Caco-2 (cell line): ENCODE measurements at regions of chr16 and their contacts with region 1.

Region 1: DNA sequence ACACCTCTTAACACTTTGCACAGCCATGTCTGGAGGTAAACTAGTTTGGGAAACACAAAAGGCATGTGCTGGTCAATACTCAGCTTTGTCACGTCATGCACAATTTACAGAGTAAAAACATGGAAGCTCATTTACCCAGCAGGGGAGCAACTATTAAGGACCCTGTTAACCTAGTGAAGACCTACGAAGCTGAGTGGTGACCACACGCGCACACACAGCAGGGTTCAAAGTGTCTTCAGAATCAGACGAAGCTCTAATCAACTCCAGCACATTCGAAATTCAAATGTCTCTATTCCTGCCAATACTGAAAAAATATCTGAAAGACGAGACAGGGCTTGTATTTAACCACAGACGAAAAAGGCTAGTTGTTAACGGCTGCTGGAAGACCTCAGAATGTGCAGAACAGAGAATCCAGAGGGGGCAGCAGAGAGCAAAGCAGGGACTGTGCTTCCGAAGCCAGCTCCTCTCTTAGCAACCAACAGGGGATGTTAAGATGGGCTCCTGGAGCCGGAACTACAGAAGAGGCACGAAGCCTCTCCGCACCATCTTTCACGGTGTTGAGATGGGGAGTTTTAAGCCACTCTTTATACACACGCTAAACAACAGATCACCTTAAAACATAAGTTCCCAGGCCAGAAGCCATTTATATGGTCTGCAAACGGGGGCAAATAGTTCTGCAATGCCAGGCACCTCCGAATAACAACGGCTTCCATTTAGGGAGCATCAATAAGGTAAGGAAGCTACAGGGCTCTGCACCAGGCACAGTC is 45.7 kb downstream of the CMTM4 start:
- DNase-seq: peak; percentile 75 to 86
- H3K4me3 ChIP-seq: no peak overlapping the region
- H3K4me3 Mint-ChIP-seq: peak overlapping the region; percentile 42
- H3K27ac Mint-ChIP-seq: no peak overlapping the region
- H3K4me1 ChIP-seq: peaks cover 19% of the 10 kb centered on the region; the same call in 1 of the 2 replicates
- H3K4me1 Mint-ChIP-seq: peaks cover 24% of the 10 kb centered on the region
- H3K27me3 ChIP-seq: no peaks in the 10 kb centered on the region
- H3K27me3 Mint-ChIP-seq: no peaks in the 10 kb centered on the region
- CTCF ChIP-seq: peak; percentile 92 to 96

Region 2: DNA sequence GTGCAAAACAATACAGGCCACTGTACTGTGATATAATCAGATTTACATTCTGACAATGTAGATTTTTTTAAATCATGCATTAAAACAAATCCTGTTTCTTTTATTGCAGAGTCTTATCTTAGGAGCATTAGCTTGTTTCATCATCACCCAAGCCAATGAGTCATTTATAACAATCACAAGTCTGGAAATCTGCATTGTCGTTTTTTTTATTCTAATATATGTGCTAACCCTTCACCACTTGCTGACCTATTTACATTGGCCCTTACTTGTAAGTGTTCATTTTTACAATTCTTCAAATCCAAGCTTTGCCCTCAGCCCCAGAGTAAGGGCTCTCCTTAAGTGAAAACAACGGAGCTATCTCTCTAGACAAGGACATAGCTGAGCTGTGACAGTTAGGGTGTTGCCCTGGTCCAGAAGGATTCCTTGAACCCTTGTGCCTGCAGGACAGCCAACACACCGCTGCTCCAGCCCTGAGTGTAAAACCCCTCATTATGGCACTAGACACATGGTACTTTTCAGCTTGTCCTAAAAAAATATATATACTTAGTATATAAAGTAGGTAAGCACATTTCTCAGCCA is 81.0 kb before region 1 on chr16:
- CTCF ChIA-PET with region 1: no interaction called
- POLR2A ChIA-PET with region 1: no interaction called
- intact Hi-C with region 1: no loop called
- DNase-seq: no peak
- H3K4me3 ChIP-seq: no peak overlapping the region
- H3K4me3 Mint-ChIP-seq: no peak overlapping the region
- H3K27ac Mint-ChIP-seq: no peak overlapping the region
- H3K4me1 ChIP-seq: no peaks in the 10 kb centered on the region
- H3K4me1 Mint-ChIP-seq: no peaks in the 10 kb centered on the region
- H3K27me3 ChIP-seq: no peaks in the 10 kb centered on the region
- H3K27me3 Mint-ChIP-seq: no peaks in the 10 kb centered on the region
- CTCF ChIP-seq: no peak

Region 3: DNA sequence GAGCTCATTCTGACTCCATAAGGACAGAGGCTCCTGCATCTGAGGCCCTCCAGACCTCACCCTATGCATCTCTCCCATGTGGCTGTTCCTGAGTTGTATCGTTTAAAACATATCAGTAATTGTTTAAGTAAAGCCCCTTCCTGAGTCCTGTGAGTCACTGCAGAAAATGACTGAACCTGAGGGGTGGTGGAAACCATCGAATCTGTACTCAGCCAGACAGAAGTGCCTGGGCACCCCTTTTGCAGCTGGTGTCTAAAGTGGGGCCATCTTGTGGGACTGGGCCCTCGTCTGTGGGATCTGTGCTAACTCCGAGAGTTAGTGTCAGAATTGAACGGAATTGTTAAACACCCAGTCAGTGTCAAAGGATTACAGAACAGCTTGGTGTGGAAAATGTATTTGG is 21.0 kb before region 1 on chr16:
- CTCF ChIA-PET with region 1: no interaction called
- POLR2A ChIA-PET with region 1: no interaction called
- intact Hi-C with region 1: loop called (anchors 1 kb)
- DNase-seq: no peak
- H3K4me3 ChIP-seq: no peak overlapping the region
- H3K4me3 Mint-ChIP-seq: no peak overlapping the region
- H3K27ac Mint-ChIP-seq: no peak overlapping the region
- H3K4me1 ChIP-seq: no peaks in the 10 kb centered on the region
- H3K4me1 Mint-ChIP-seq: no peaks in the 10 kb centered on the region
- H3K27me3 ChIP-seq: no peaks in the 10 kb centered on the region
- H3K27me3 Mint-ChIP-seq: no peaks in the 10 kb centered on the region
- CTCF ChIP-seq: no peak

Region 4: GRCh38 chr16:66751303-66751991 is 100.6 kb after region 1 on chr16 and contains the start of gene DYNC1LI2:
- CTCF ChIA-PET with region 1: interaction called, 10 read pairs
- POLR2A ChIA-PET with region 1: no interaction called
- intact Hi-C with region 1: no loop called
- DNase-seq: peak; percentile 78 to 94
- H3K4me3 ChIP-seq: peak within 1 kb of the TSS; percentile 100
- H3K4me3 Mint-ChIP-seq: peak within 1 kb of the TSS; percentile 78
- H3K27ac Mint-ChIP-seq: peak within 1 kb of the TSS; percentile 55
- H3K4me1 ChIP-seq: peaks cover 12% of the 10 kb centered on the region; the same call in 1 of the 2 replicates
- H3K4me1 Mint-ChIP-seq: peaks cover 26% of the 10 kb centered on the region
- H3K27me3 ChIP-seq: no peaks in the 10 kb centered on the region
- H3K27me3 Mint-ChIP-seq: no peaks in the 10 kb centered on the region
- CTCF ChIP-seq: peak; percentile 61 to 95
- total RNA-seq, gene DYNC1LI2: 180 and 182 TPM in 2 replicates